OCI-LY7 (cell line): ENCODE measurements at regions of chr17 and their contacts with region 1.

Region 1: DNA sequence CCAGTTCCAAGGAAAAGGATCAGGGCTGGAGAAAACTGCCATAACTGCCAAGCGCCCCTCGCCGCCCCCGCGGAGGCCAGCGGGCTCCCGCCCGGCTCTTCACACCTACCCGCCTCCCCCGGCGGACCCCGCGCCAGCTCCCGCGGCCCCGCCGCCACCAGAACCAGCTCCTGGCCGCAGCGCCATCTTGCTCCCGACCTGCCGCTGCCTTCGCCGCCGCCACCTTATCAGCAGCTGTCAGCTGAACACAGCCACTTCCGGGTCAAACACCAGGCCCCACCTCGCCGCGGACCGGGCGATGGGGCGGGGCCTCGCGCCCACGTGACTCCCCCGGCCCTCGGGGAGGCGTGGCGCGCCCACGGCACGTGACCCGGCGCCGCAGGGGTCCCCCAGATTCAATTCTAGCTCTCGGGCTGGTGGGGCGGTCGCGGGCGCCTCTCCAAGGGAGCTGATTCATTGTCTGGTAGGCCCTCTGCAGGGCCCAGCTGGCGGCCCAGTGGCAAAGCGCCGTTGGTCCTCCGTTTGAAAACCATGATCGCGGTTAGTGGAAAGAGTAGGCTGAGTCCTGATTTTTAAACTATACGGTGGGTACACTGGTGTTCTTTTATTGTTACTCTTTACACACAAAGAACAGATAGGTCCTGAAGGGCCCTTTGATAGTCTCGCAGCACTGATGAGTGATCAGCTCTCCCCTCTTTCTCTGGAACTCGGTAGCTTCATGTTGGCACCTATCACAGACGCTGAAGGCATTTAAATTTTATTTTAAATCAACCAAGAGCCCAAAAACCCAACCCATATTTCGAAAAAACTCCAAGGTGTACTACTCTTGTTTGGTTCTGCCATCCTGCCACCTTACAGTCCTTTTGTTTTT is at the start of gene SYNRG:
- DNase-seq: peak; percentile 97
- H3K4me3 ChIP-seq: peak within 1 kb of the TSS; percentile 99
- H3K27ac ChIP-seq: peak within 1 kb of the TSS; percentile 97
- H3K4me1 ChIP-seq: peaks cover 40% of the 10 kb centered on the region
- CTCF ChIP-seq: peak; percentile 73
- total RNA-seq, gene SYNRG: 39.6 and 46.5 TPM in 2 replicates

Region 2: DNA sequence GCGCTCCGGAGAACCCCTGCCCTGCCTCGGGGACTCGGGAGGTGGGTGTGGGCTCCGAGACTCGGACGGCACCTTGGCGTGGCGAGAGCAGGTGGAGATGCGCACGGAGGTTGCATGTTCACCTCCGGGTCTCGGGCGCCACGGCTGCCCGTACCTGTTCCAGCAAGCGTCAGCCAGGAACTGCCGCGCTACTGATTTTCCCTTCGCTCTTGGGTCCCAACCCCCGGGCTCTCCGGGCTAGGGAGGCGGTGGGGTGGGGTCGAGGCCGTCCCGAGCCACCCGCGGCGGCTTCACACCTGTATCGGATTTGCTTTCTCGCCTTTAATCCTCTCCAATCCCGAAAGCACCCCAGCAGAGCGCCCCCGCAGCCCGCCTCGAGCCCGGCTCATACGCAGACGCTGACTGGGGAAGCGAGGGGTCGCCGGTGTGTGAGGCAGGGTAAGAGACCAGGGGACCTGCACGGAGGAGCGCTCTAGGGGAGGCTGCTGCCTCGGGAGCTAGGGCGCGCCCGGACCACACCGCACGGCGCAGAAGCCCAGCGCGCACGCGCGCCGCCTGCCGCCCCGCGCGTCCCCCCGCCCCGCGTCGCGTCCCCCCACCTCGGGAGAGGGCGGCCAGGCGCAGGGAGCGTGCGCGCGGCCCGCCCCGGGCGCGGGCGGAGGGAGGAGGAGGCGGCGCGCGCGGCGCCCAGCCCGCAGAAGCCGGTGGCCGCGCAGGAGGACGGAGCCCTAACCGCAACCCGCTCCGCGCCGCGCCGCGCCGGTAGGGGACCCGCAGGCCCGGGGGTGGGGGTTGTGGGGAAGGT is 120.0 kb before region 1 on chr17 and contains the start of gene DUSP14:
- CTCF ChIA-PET with region 1: no interaction called
- POLR2A ChIA-PET with region 1: no interaction called
- intact Hi-C with region 1: loop called (anchors 1 kb)
- DNase-seq: peak; percentile 91
- H3K4me3 ChIP-seq: peak within 1 kb of the TSS; percentile 88
- H3K27ac ChIP-seq: peak within 1 kb of the TSS; percentile 51
- H3K4me1 ChIP-seq: peaks cover 41% of the 10 kb centered on the region
- CTCF ChIP-seq: peak; percentile 59
- total RNA-seq, gene DUSP14: 21.2 and 21.5 TPM in 2 replicates

Region 3: DNA sequence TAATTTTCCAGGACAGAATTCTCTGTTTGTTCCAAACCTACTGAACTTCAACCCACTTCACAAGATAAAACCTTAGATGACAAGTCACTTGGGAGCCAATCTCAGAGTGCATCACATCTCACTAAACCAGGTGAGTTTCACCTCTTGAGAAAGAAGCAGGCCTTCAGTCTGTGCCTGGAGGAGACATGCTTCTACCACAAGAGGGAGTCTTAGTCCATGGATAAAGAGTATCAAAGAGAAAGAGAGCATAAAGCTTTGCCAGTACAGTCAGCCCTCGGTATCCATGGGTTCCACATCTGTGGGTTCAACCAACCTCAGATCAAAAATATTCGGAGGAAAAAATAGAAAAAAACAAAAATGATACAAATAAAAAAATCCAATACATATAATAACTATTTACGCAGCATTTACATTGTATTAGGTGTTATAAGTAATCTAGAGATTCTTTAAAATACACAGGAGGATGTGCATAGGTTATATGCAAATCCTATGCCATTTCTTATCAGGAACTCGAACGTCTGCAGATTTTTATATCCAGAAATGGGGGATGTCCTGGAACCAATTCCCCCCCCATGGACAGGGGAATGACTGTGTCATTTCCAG is 82.1 kb before region 1 on chr17:
- CTCF ChIA-PET with region 1: no interaction called
- POLR2A ChIA-PET with region 1: no interaction called
- intact Hi-C with region 1: loop called (anchors 1 kb)
- DNase-seq: peak; percentile 72
- H3K4me3 ChIP-seq: no peak overlapping the region
- H3K27ac ChIP-seq: no peak overlapping the region
- H3K4me1 ChIP-seq: no peaks in the 10 kb centered on the region
- CTCF ChIP-seq: peak; percentile 90